Sigmoid colon (tissue), 7 donors: ENCODE measurements at regions of chr6 and their contacts with region 1.

Region 1: GRCh38 chr6:26204332-26205165 is 117.3 kb downstream of the HFE start:
- DNase-seq: peak; percentile 99
- H3K4me3 ChIP-seq: peak overlapping the region; percentile 61 to 75 (median 65)
- H3K27ac ChIP-seq: peak overlapping the region; percentile 95 to 98 (median 98)
- H3K4me1 ChIP-seq: peaks cover 0 to 29% (median 16%) of the 10 kb centered on the region in 4 donors
- H3K27me3 ChIP-seq: no peaks in the 10 kb centered on the region
- CTCF ChIP-seq: peak in 2 of 4 experiments; percentile 8 to 34
- EP300 ChIP-seq: peak in 3 of 4 donors; percentile 67 to 81 (median 81)
- POLR2A ChIP-seq: peak; percentile 99

Region 2: DNA sequence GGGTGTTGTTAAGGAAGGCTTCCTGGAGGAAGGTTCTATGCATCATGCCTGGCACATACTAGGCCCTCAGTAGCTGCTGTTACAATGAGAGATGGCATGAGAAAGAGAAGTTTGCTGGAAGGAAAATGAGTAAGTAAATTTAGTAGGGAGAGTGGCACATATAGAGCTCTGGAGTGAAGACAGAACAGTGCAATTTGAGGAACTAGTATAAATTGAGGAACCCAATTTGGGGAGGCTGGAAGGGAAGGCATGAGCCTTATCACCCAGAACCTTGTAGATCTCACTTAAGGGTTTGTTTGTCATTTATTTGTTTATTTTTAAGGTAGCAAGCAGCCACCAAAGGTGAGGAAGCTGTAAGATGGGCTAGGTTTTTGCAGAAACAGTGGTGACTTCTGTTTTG is 639.6 kb before region 1 on chr6:
- intact Hi-C with region 1: no loop called
- DNase-seq: no peak
- H3K4me3 ChIP-seq: no peak overlapping the region
- H3K27ac ChIP-seq: no peak overlapping the region
- H3K4me1 ChIP-seq: no peaks in the 10 kb centered on the region
- H3K27me3 ChIP-seq: no peaks in the 10 kb centered on the region
- CTCF ChIP-seq: no peak
- EP300 ChIP-seq: no peak
- POLR2A ChIP-seq: no peak

Region 3: DNA sequence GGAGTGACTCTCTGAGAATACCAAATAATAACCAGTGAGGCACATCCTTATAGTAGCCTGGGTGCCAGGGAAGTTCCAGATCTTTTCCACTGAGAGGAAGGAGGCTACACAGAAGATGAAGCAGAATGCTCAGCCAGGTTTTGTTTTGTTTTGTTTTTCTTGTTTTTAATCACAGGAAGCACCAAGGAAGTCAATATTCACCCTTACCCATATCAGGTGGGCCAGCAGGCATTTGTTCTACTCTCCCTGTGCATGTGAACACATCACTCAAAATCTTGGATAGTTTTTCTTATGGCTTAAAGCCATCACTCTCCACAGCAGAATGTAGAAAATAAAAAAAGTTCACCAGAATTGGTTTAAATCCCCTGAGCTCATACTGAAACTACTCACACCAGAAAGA is 383.2 kb before region 1 on chr6:
- intact Hi-C with region 1: no loop called
- DNase-seq: no peak
- H3K4me3 ChIP-seq: no peak overlapping the region
- H3K27ac ChIP-seq: no peak overlapping the region
- H3K4me1 ChIP-seq: no peaks in the 10 kb centered on the region
- H3K27me3 ChIP-seq: no peaks in the 10 kb centered on the region
- CTCF ChIP-seq: no peak
- EP300 ChIP-seq: no peak
- POLR2A ChIP-seq: no peak

Region 4: DNA sequence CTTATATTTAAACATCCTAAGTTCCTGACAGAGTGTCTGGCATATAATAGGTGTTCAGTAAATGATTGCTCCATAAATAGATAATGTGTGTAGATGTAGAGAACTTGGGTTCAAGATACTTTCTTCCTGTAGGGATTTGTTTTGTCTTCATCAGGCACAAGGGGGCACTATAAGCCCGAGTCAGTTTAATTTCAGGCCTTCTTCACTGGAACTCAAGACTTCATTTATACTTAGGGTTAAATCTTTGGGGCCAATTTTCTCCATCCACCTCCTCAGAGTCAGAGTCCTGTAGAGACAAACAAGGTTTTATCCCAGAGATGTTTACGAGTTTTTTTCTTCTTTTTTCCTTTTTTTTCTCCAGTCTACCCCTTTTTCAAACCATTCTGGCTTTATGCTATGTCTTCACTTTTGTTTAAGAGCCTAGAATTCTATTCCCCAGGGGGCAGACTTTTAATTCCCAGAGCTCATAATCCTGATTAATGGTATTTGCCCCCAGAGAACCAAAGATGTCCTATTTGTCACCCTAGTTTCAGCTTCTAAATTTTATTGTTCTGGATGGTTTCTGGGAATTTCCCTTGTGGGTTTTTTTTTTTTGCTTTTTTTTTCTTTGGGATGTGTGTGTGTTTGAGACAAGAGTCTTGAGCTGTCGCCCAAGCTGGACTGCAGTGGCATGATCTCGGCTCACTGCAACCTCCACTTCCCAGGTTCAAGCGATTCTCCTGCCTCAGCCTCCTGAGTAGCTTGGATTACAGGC is 28.9 kb before region 1 on chr6:
- intact Hi-C with region 1: loop called (anchors 2 kb)
- DNase-seq: no peak
- H3K4me3 ChIP-seq: no peak overlapping the region
- H3K27ac ChIP-seq: peak overlapping the region in 2 of 4 donors; percentile 34 to 52
- H3K4me1 ChIP-seq: peaks cover 0 to 19% (median 5%) of the 10 kb centered on the region in 4 donors
- H3K27me3 ChIP-seq: no peaks in the 10 kb centered on the region
- CTCF ChIP-seq: peak in 3 of 4 experiments; percentile 45 to 67 (median 63)
- EP300 ChIP-seq: no peak
- POLR2A ChIP-seq: no peak

Region 5: DNA sequence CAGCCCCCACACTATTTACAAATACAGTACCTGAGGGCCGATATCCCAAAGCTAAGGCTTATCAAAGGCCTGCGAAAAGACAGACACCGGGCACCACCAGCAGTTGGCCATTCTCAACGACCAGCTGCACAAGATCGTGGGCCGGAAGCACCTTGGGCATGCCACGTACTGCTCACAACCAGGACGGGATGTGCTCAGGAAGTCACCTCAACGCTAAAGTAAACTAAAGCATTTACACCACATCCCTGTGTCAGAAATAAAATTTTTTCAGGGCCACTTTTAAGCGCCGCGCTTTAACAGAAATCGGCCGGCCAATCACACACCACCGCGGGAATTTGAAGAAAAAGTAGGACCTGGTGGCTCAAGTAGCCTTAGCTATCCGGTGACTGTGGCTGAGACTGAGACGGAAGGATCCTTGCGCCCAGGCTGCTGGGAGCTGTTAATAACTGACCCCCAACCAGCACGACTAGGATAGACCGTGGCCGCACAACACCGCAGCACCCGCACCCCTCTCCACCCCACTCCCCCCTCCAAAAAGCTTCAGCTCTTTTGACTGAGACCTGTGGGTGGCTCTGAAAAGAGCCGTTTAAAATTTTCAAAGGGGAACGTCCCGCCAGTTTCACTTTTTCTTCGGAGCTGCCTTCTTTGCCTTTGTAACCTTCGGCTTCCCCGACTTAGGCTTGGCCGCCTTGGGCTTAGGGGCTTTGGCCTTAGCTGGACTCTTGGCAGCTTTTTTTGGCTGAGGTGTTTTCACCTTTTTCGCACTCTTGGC is 29.3 kb after region 1 on chr6:
- intact Hi-C with region 1: no loop called
- DNase-seq: peak; percentile 76
- H3K4me3 ChIP-seq: peak overlapping the region; percentile 45 to 57 (median 55)
- H3K27ac ChIP-seq: peak overlapping the region; percentile 81 to 90 (median 86)
- H3K4me1 ChIP-seq: peaks cover 0 to 20% (median 13%) of the 10 kb centered on the region in 4 donors
- H3K27me3 ChIP-seq: peaks cover 7 to 58% (median 17%) of the 10 kb centered on the region in 3 donors
- CTCF ChIP-seq: no peak
- EP300 ChIP-seq: peak in 1 of 4 donors; percentile 21
- POLR2A ChIP-seq: peak; percentile 8 to 19

Region 6: DNA sequence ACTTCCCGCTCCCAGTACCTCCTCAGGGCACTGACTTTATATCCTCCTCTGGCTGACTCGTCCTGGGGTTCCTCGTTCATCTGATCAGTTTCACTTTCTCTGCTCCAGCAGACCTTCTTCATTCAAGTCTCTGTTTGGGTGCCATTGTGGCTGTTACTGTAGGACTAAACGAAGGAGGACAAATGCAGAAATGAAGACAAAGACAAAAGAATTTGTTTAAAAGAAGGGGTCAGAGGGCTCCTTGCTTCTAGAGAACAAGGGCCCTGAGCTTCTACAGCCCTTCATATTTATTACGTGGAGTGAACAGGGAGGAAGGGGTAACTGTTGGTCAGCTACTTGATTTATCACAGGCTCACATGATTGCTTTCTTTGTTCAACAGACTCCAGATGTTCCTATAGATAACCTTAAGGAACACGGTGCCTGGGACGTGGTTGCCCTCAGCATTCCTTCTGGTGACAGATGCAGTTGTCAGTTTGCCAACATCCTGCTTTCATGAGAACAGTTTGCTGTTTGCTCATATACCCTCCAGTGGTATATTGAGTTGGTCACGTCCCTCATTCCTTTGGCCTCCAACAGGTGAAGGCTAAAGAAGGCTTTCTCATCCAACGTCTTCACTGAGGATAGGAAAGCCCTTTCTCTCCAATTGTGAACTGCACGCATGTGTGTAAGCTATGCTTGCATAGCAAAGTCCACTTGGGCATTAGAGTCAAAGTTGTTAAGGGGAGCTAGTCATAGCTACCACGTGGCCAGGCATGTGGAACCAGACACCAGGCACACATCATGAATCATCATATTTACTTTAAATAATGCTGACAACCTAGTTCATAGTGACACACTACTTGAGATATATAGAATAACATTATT is 91.4 kb after region 1 on chr6:
- intact Hi-C with region 1: no loop called
- DNase-seq: no peak
- H3K4me3 ChIP-seq: no peak overlapping the region
- H3K27ac ChIP-seq: no peak overlapping the region
- H3K4me1 ChIP-seq: no peaks in the 10 kb centered on the region
- H3K27me3 ChIP-seq: no peaks in the 10 kb centered on the region
- CTCF ChIP-seq: no peak
- EP300 ChIP-seq: no peak
- POLR2A ChIP-seq: no peak